Aorta (tissue), 5 donors: ENCODE measurements at regions of chr17 and their contacts with region 1.

Region 1: DNA sequence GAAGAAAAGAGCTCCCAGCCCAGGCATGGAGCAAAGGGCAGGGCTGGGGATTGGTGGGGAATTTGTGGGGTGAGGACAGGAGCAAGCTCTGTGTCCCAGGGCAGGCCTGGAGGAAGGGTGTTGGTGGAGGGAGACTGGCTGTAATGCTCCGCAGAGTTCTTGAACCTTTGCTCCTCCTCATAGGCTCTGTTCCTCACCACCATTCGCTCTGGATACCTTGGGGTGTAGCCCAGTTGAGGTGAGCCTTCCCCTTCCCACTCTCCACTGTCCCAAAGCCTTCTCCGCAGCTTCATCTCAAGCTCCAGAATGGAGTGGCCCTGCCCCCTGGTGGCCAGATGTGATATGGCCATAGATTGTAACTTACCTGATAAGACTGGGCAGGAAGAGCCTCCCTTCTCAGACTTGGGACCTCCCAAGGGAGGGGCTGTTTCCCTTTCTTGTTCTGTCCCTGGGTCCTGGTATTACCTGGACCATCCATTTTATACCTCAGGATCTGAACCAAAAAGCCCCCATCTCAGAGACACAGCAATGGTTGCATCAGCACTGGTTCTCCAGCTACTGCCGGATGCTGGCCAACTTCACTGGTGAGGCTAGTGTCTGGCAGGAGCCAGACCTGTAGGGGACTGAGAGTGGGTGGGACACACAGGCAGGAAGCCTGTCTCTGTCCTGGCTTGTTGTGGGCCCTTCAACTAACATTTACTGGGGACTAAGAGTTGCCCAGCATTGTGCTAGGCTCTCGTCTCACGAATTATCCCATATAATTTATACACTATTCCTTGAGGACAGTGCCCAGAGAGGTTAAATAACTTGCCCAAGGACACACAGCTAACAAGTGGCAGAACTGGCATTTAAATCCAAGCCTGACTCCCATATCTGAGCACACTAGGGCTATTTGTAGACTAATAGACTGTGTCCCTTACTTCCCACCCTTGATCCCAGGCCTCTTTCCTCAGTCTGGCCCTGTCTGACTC is 19.1 kb upstream of the STAC2 start:
- DNase-seq: peak; percentile 87 to 95
- ATAC-seq: peak; percentile 92
- H3K4me3 ChIP-seq: no peak overlapping the region
- H3K27ac ChIP-seq: no peak overlapping the region
- H3K4me1 ChIP-seq: no peaks in the 10 kb centered on the region
- H3K27me3 ChIP-seq: no peaks in the 10 kb centered on the region

Region 2: DNA sequence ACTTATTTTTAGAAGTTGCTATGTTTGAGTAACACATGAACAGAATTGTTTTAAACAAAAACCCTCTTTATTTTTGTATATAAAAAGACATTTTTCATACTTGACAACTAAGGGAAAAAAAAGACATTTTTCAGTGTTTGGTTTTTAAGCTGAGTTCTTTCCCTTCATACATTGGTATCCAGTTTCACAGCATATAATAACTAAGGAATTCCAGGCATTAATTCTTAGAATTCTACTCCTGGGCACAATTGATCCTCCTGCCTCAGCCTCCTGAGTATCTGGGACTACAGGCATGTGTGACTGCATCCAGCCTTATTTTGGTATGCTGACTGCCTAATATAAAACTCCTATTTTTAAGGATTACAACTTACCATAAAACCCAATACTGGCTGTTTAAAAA is 286.1 kb before region 1 on chr17:
- intact Hi-C with region 1: no loop called
- DNase-seq: no peak
- ATAC-seq: no peak
- H3K4me3 ChIP-seq: no peak overlapping the region
- H3K27ac ChIP-seq: no peak overlapping the region
- H3K4me1 ChIP-seq: no peaks in the 10 kb centered on the region
- H3K27me3 ChIP-seq: no peaks in the 10 kb centered on the region

Region 3: DNA sequence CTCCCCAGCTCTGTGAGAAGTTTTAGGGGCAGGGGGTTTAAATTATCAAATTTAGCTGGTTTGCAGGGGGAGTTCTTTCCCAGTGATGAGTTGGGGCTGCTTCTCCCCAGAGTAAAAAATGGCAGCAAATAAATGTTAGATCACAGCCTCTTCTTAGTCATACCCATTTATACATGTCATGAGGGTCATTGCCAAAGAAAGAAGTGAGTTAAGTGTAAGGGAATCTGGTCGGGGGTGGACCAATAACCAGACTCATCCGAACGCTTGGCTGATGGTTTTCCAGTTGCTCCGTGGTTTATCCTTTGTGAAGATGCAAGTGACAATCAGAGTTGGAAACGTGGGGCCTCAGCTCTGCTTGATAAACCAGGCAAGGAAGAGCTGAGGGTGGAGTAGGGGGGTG is 180.5 kb before region 1 on chr17:
- intact Hi-C with region 1: no loop called
- DNase-seq: peak in 1 of 2 donors; percentile 39
- ATAC-seq: peak; percentile 15
- H3K4me3 ChIP-seq: no peak overlapping the region
- H3K27ac ChIP-seq: no peak overlapping the region
- H3K4me1 ChIP-seq: peaks cover 0 to 10% of the 10 kb centered on the region in 2 donors
- H3K27me3 ChIP-seq: no peaks in the 10 kb centered on the region

Region 4: GRCh38 chr17:39209317-39210092 is 35.4 kb before region 1 on chr17:
- intact Hi-C with region 1: loop called (anchors 2 kb)
- DNase-seq: peak; percentile 94 to 97
- ATAC-seq: peak; percentile 90
- H3K4me3 ChIP-seq: no peak overlapping the region
- H3K27ac ChIP-seq: peak overlapping the region in 1 of 2 donors; percentile 34
- H3K4me1 ChIP-seq: no peaks in the 10 kb centered on the region
- H3K27me3 ChIP-seq: no peaks in the 10 kb centered on the region